Left colon (tissue), 2 donors: ENCODE measurements at regions of chr17 and their contacts with region 1.

Region 1: DNA sequence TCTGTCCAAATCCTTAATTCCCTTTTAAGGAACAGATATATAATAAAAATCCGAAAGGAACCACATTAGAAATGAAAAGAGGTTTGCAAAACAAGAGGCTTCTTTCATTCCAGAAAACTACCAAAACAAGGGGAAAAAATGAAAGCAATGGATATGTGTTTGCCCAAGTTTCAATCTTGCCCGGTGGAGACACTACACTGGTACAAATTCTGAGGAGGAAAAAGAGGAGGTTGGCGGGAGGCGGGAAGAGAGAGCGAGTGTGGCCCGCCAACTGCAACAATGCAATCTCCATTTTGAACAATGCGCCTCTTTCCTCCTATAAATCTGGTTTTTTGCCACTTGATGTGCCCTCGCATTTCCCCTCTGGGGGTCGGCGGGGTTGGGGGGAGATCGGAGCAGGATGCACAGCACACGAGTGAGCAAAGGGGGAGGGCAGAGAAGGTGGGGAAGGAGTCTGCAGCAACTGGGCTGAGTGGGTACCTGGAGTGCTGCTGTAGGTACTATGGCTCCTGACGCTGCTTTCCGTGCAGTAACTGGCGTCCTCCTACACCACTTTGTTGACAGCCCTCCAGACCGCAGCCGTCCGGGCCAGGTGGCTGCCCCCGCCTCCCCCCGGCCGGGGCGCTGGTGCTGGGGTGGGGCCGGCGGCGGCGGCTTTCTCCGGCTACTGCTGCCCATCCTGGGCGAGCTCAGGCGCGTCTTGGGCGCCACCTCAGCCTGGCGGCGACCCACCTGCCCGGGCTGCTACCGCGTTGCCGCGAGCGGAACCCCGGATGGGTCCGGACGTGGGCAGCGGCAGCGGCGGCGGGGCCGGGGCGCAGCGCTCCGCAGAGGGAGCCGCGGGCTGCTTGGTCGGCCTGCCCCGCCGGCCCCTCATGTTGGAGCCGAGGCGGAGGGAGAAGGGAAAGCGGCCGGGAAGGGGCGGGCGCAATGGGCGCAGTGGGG is 93.8 kb upstream of the PLEKHM1 start:
- DNase-seq: peak; percentile 73 to 82
- ATAC-seq: peak; percentile 74

Region 2: GRCh38 chr17:45425125-45425983 is 159.0 kb before region 1 on chr17:
- intact Hi-C with region 1: no loop called
- DNase-seq: peak; percentile 90 to 95
- ATAC-seq: peak; percentile 82

Region 3: GRCh38 chr17:46264456-46265198 is 680.3 kb after region 1 on chr17:
- intact Hi-C with region 1: loop called in 1 of 2 experiments (anchors 5 kb)
- DNase-seq: no peak
- ATAC-seq: peak; percentile 23